Transverse colon (tissue), 4 donors: ENCODE measurements at regions of chr11 and their contacts with region 1.

Region 1: DNA sequence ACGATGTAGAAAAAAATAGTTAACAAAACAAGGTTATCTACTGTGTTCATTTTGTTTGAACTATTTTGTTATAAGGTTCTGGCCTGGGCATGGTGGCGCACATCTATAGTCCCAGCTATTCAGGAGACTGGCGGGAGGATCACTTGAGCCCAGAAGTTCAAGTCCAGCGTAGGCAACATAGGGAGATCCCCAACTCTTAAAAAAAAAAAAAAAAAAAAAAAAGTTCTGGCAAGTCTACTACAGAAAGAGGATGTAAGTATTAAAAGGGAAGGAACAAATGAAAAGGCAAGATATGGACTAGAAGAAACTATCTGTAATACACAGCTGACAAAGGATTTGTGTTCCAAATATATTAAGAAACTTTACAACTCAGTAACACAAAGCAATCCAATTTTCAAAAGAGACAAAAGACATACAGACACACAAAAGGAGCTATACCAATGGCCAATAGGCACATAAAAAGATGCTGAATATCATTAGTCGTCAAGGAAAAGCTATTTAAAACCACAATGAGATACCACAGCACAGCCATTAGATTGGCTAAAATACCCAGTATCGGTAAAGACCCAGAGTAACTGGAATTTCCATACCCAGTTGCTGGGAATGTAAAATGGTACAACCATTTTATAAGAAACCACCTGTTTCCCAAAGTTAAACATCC is 27.4 kb downstream of the RRAS2 start:
- DNase-seq: no peak
- H3K4me3 ChIP-seq: no peak overlapping the region
- H3K27ac ChIP-seq: no peak overlapping the region
- H3K4me1 ChIP-seq: peaks cover 0 to 7% (median 0%) of the 10 kb centered on the region in 4 donors
- H3K27me3 ChIP-seq: no peaks in the 10 kb centered on the region
- CTCF ChIP-seq: no peak
- EP300 ChIP-seq: no peak
- POLR2A ChIP-seq: no peak

Region 2: GRCh38 chr11:14089690-14090462 is 241.7 kb before region 1 on chr11:
- in situ Hi-C with region 1: no loop called
- intact Hi-C with region 1: loop called (anchors 5 kb)
- DNase-seq: no peak
- H3K4me3 ChIP-seq: no peak overlapping the region
- H3K27ac ChIP-seq: no peak overlapping the region
- H3K4me1 ChIP-seq: no peaks in the 10 kb centered on the region
- H3K27me3 ChIP-seq: no peaks in the 10 kb centered on the region
- CTCF ChIP-seq: no peak
- EP300 ChIP-seq: no peak
- POLR2A ChIP-seq: no peak

Region 3: DNA sequence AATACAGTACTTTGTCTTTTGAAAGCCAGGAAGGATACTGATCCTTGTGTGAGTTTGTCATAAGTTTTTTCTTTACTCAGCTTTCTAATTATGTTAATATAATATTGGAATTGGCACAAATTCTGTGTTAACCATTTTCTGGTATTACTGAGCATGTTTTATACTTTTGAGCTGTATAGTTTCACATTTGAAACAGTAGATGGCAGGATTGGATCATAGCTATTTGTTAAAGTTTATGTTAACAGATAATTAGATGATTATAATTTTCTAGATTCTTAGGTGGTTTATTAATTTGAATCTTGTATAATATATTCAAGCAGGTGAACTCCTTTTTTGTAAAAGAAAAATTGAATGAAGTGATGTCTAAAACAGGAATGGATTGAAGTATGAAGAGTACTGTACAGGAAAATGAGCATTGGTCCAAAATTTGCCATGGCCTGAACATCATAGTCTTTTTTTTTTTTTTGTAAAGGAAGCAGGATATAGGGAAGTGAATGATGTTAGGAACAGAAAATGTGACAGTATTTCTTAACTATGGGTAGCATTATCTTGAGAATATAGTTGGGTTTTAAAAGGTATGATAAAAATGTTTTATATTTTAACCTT is 458.4 kb after region 1 on chr11:
- in situ Hi-C with region 1: no loop called
- intact Hi-C with region 1: no loop called
- DNase-seq: no peak
- H3K4me3 ChIP-seq: no peak overlapping the region
- H3K27ac ChIP-seq: no peak overlapping the region
- H3K4me1 ChIP-seq: no peaks in the 10 kb centered on the region
- H3K27me3 ChIP-seq: no peaks in the 10 kb centered on the region
- CTCF ChIP-seq: peak in 4 of 5 experiments; percentile 37 to 46 (median 40)
- EP300 ChIP-seq: no peak
- POLR2A ChIP-seq: no peak

Region 4: GRCh38 chr11:15370495-15371147 is 1039.0 kb after region 1 on chr11:
- in situ Hi-C with region 1: no loop called
- intact Hi-C with region 1: no loop called
- DNase-seq: no peak
- H3K4me3 ChIP-seq: no peak overlapping the region
- H3K27ac ChIP-seq: no peak overlapping the region
- H3K4me1 ChIP-seq: no peaks in the 10 kb centered on the region
- H3K27me3 ChIP-seq: no peaks in the 10 kb centered on the region
- CTCF ChIP-seq: no peak
- EP300 ChIP-seq: no peak
- POLR2A ChIP-seq: no peak